ENCODE measurements at regions of chr10 and their contacts with region 1.

Region 1: GRCh38 chr10:112949875-112950507 is at the start of gene TCF7L2:
- DNase-seq: peak; percentile 98
- ATAC-seq: peak; percentile 88
- total RNA-seq, gene TCF7L2: 9.4 TPM

Region 2: DNA sequence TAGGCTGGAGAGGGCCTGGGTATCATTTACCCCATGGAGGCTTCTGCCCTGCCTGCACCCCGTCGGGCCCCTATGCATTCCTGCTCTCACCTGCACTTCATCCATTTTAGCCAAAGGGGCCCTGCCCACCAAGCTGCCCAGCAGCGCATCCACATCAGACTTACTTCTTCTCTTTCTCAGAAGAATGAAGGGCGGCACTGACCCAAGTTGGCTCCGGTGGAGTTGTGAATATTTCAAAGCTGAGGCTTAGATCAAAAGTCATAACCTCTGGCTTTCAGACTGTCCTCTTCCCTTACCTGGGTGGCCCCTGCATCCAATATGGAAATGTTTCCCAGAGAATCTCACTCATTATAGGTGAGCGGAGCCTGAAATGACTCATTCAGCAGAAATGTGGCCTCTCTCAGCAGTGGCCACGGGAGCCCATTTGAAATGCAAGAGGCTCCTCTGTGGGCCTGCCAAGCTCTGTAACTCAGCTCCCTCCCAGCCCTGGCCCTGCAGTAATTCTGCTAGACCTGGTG is 117.6 kb before region 1 on chr10:
- intact Hi-C with region 1: no loop called
- DNase-seq: no peak
- ATAC-seq: no peak

Region 3: DNA sequence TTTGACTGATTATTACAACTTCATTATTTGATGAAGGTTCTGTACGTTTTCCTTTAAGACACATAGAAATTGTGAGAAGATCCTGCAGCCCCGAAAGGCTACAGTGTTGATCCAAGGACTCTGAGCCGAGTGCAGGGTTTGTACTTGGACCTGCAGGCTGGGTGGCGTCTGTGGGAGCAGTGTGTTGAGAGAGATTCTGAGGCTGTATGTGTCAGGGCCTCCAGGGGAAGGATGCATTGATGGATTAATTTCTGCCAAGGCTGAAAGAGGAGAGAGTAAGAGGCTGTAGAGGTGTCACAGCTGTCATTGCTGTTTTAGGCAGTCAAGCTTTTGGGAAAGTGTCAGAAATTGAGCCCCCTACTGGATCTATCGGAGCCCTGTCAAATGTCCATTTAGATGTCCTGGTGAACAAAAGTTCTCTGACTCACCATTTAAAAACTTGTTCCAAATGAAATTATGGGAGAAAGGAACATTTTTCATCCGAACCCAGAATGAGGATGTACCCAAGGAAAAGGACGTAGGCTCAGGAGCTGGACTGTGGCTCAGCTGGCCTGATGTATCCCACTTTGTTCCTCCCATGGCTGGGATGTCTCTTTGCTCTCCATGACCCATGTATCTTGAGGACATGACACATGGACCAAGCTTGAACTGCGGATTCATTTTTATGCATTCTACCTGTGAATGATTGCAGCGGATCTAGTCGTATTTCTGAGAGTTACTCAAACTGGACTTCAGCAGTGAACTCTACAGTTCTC is 102.3 kb after region 1 on chr10:
- intact Hi-C with region 1: loop called (anchors 10 kb)
- DNase-seq: no peak
- ATAC-seq: peak; percentile 47

Region 4: GRCh38 chr10:113126229-113127201 is 176.5 kb after region 1 on chr10:
- intact Hi-C with region 1: loop called (anchors 5 kb)
- DNase-seq: peak; percentile 84
- ATAC-seq: peak; percentile 97

Region 5: GRCh38 chr10:113320987-113321386 is 371.0 kb after region 1 on chr10:
- intact Hi-C with region 1: no loop called
- DNase-seq: no peak
- ATAC-seq: peak; percentile 55

Measured in Right ventricle myocardium superior (tissue), 1 donor.